Right ventricle myocardium inferior (tissue), 1 donor: ENCODE measurements at regions of chr5 and their contacts with region 1.

Region 1: GRCh38 chr5:42656651-42657015 is 100.0 kb upstream of the CCDC152 start:
- DNase-seq: no peak
- ATAC-seq: peak; percentile 50

Region 2: DNA sequence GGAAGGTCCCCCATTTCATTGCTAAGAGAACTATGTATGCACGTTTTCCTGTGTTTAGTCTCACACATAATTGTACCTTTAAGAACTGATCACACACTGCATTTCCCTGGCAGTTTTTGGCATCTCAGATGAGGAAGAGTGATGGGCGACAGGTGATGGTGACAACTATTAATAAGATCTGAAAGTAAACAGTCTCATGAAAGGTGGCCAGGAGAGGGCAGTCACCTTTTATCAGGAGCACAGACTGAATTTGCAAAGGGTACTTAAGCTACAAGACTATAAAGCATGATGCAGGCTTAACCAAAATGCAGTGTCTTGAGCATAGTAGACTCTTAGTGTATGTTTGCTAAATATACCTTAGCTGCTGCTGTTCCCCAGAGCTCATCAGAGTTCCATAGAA is 141.9 kb before region 1 on chr5:
- intact Hi-C with region 1: loop called (anchors 10 kb)
- DNase-seq: no peak
- ATAC-seq: no peak

Region 3: GRCh38 chr5:42591015-42591414 is 65.6 kb before region 1 on chr5:
- intact Hi-C with region 1: loop called (anchors 5 kb)
- DNase-seq: peak; percentile 80
- ATAC-seq: peak; percentile 87

Region 4: GRCh38 chr5:42600431-42600830 is 56.2 kb before region 1 on chr5:
- intact Hi-C with region 1: loop called (anchors 5 kb)
- DNase-seq: no peak
- ATAC-seq: no peak